IMR-90 (cell line): ENCODE measurements at regions of chr3 and their contacts with region 1.

Region 1: GRCh38 chr3:131794766-131795388 is 239.9 kb downstream of the CPNE4 start:
- DNase-seq: peak; percentile 52
- ATAC-seq: peak; percentile 95
- H3K4me3 ChIP-seq: no peak overlapping the region
- H3K27ac ChIP-seq: no peak overlapping the region
- H3K4me1 ChIP-seq: no peaks in the 10 kb centered on the region
- H3K27me3 ChIP-seq: no peaks in the 10 kb centered on the region; the same call in 1 of the 2 replicates
- CTCF ChIP-seq: peak; percentile 88
- POLR2A ChIP-seq: no peak
- RAD21 ChIP-seq: peak; percentile 71

Region 2: DNA sequence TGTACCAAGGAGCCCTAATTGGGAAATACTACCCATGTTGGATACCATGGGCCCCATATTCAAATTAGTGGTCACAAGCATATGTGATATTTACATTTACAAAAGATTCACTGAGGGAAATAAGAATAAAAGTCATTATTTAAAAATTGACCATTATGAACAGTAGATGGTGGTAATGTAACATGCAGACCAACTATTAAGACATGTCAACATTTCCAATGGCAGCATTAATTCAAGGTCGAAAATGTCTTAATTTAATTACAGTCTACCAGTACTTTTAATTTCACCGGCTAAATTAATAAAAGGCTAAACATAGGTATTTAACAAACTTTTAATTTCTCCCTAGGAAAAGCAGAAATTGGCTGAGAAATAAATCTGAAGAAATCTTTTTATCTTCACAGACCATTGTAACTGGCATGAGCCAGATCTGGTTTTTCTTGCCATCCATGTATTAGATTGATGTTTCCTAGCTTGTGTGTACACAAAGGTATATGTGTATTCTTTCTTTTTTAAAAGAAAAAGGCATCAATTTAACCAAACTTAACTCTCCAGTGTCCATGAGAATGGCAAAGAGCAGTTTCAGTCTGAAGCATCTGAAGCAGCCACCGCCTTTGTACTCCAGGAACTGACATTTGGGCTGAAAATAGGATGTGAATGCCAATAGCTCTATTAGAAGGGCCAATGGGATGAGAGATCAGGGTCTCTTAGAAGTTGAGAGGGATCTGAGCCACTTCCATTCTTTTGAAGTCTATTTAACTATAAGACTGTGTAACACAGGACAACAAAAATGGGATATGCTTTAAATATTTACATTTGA is 741.6 kb before region 1 on chr3:
- CTCF ChIA-PET with region 1: no interaction called
- POLR2A ChIA-PET with region 1: no interaction called
- dilution Hi-C with region 1: no loop called
- in situ Hi-C with region 1: no loop called
- intact Hi-C with region 1: loop called (anchors 5 kb)
- DNase-seq: peak; percentile 1
- ATAC-seq: no peak
- H3K4me3 ChIP-seq: no peak overlapping the region
- H3K27ac ChIP-seq: no peak overlapping the region
- H3K4me1 ChIP-seq: no peaks in the 10 kb centered on the region
- H3K27me3 ChIP-seq: no peaks in the 10 kb centered on the region
- CTCF ChIP-seq: peak; percentile 35; the same call in 1 of the 2 replicates
- POLR2A ChIP-seq: no peak
- RAD21 ChIP-seq: peak; percentile 33; the same call in 1 of the 2 replicates

Region 3: DNA sequence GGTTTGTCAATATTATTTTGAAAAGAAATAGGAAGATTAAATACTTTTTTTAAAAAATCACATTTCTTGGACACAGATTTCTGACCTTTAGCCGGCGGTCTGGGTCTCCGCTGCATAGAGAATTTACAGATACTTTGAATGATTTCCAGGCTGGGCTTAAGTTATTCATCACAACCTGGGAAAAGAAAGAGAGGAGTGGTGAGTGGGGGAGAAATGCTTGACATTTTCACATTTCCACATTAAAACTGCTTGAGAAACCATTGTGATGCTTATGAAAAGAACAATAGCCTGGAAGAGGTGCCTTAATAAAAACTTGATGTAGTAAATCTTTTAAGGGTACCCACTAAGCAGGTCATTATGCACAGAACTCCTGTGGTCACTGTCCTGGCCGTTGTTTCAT is 125.3 kb before region 1 on chr3:
- CTCF ChIA-PET with region 1: no interaction called
- POLR2A ChIA-PET with region 1: no interaction called
- dilution Hi-C with region 1: no loop called
- in situ Hi-C with region 1: no loop called
- intact Hi-C with region 1: no loop called
- DNase-seq: no peak
- ATAC-seq: no peak
- H3K4me3 ChIP-seq: no peak overlapping the region
- H3K27ac ChIP-seq: no peak overlapping the region
- H3K4me1 ChIP-seq: no peaks in the 10 kb centered on the region
- H3K27me3 ChIP-seq: no peaks in the 10 kb centered on the region
- CTCF ChIP-seq: no peak
- POLR2A ChIP-seq: no peak
- RAD21 ChIP-seq: no peak

Region 4: GRCh38 chr3:132006605-132007204 is 211.8 kb after region 1 on chr3:
- CTCF ChIA-PET with region 1: no interaction called
- POLR2A ChIA-PET with region 1: interaction called, 3 read pairs
- dilution Hi-C with region 1: loop called (anchors 25 kb)
- in situ Hi-C with region 1: no loop called
- intact Hi-C with region 1: no loop called
- DNase-seq: peak; percentile 24
- ATAC-seq: peak; percentile 74
- H3K4me3 ChIP-seq: no peak overlapping the region
- H3K27ac ChIP-seq: no peak overlapping the region
- H3K4me1 ChIP-seq: no peaks in the 10 kb centered on the region
- H3K27me3 ChIP-seq: no peaks in the 10 kb centered on the region
- CTCF ChIP-seq: peak; percentile 56
- POLR2A ChIP-seq: no peak
- RAD21 ChIP-seq: peak; percentile 34; the same call in 1 of the 2 replicates

Region 5: DNA sequence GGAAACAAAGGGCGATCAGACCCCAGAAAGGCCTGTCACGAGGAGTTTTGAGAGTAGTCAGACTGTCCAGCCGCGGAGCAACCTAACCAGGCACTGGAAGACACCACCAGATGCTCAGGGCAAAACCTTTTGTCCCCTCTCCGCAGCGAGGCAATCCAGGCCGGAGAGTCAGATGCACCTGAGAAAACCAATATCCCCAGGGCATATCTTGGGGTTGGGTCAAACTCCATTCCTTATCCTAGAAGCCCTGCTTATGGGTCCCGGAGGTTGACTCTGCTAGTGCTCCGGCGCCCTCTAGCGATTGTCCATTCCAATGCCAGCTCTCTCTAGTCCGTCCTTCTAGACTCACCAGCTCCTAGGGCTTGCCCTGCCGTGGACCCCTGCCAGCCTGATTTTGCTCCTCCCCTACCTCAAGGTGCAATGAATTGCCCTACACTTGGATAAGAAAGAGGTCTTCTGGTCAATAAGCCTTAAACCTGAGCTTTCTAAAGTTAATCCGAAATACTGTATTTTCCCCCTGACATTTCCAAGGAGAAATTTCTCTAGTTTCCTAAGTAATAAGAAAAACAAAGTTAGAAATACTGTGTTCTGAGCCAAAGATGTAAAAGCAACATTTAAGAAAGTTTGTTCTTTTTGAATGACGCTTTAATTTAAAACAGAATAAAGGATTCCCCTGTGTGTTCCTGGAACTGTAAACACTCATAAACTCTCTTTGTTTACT is 234.5 kb after region 1 on chr3:
- CTCF ChIA-PET with region 1: interaction called, 16 read pairs
- POLR2A ChIA-PET with region 1: no interaction called
- dilution Hi-C with region 1: loop called (anchors 25 kb)
- in situ Hi-C with region 1: loop called (anchors 5 kb)
- intact Hi-C with region 1: loop called (anchors 1 kb)
- DNase-seq: peak; percentile 61
- ATAC-seq: peak; percentile 100
- H3K4me3 ChIP-seq: no peak overlapping the region
- H3K27ac ChIP-seq: no peak overlapping the region
- H3K4me1 ChIP-seq: no peaks in the 10 kb centered on the region
- H3K27me3 ChIP-seq: peaks cover 14% of the 10 kb centered on the region
- CTCF ChIP-seq: peak; percentile 82
- POLR2A ChIP-seq: no peak
- RAD21 ChIP-seq: peak; percentile 90

Region 6: GRCh38 chr3:132034486-132035464 is 239.9 kb after region 1 on chr3 and contains the start of gene CPNE4:
- CTCF ChIA-PET with region 1: interaction called, 16 read pairs
- POLR2A ChIA-PET with region 1: no interaction called
- dilution Hi-C with region 1: no loop called
- in situ Hi-C with region 1: loop called (anchors 5 kb)
- intact Hi-C with region 1: loop called (anchors 1 kb)
- DNase-seq: peak; percentile 51
- ATAC-seq: peak; percentile 99
- H3K4me3 ChIP-seq: no peak within 1 kb of the TSS
- H3K27ac ChIP-seq: no peak within 1 kb of the TSS
- H3K4me1 ChIP-seq: no peaks in the 10 kb centered on the region
- H3K27me3 ChIP-seq: peaks cover 19% of the 10 kb centered on the region
- CTCF ChIP-seq: peak; percentile 84
- POLR2A ChIP-seq: no peak
- RAD21 ChIP-seq: peak; percentile 36; the same call in 1 of the 2 replicates
- total RNA-seq, gene CPNE4: not detected in 2 replicates

Region 7: GRCh38 chr3:132180337-132180791 is 385.5 kb after region 1 on chr3:
- CTCF ChIA-PET with region 1: interaction called, 4 read pairs
- POLR2A ChIA-PET with region 1: no interaction called
- dilution Hi-C with region 1: no loop called
- in situ Hi-C with region 1: loop called (anchors 25 kb)
- intact Hi-C with region 1: loop called (anchors 1 kb)
- DNase-seq: peak; percentile 66
- ATAC-seq: peak; percentile 87
- H3K4me3 ChIP-seq: no peak overlapping the region
- H3K27ac ChIP-seq: no peak overlapping the region
- H3K4me1 ChIP-seq: no peaks in the 10 kb centered on the region
- H3K27me3 ChIP-seq: peaks cover 4% of the 10 kb centered on the region
- CTCF ChIP-seq: peak; percentile 77
- POLR2A ChIP-seq: no peak
- RAD21 ChIP-seq: peak; percentile 88